PC-9 (cell line): ENCODE measurements at regions of chr3 and their contacts with region 1.

Region 1: DNA sequence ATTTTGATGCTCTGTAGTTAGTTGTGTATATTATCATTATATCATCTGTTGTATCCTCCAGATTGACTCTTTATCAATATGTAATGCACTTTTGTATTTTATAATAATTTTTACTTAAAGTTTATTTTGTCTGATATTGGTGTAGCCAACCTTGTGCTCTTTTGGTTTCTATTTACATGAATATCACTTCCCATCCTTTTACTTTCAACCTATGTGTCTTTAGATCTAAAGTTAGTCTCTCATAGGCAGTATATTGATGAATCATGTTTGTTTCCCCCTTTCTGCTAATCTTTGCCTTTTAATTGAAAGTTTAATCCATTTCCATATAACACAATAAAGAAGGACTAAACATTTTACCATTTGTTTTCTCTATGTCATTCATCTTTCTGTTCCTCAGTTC is 28.1 kb upstream of the CD200R1L start:
- DNase-seq: no peak
- H3K4me3 ChIP-seq: no peak overlapping the region
- H3K27ac ChIP-seq: no peak overlapping the region
- H3K4me1 ChIP-seq: no peaks in the 10 kb centered on the region
- H3K27me3 ChIP-seq: no peaks in the 10 kb centered on the region
- CTCF ChIP-seq: no peak

Region 2: DNA sequence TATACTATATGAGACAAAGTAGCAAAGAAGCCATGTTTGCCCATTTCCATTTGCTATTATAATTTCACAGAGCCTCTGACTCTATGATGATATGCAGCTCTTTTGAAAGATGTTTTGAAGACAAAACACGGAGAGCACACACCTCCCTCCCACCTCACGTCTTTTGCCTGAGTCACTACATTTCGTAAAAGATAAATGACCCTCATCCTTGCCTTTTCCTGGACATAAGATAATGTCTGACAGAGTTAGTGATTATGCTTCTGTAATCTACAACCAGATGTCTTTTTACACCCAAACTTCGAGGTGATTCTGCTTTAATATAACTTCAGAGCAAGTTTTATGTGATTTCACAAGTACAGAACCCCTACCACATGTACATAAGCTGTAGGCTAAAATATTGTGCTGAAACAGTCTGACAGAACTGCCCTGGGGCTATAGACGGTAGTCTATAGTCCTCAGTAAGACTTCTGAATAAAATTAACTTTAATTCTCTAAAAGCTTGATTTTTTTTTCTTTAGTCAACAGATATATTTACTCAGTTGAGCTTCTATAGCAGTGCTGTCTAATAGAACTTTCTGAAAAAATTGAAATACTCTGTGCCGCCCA is 127.9 kb before region 1 on chr3:
- CTCF ChIA-PET with region 1: no interaction called
- POLR2A ChIA-PET with region 1: no interaction called
- intact Hi-C with region 1: no loop called
- DNase-seq: no peak
- H3K4me3 ChIP-seq: no peak overlapping the region
- H3K27ac ChIP-seq: no peak overlapping the region
- H3K4me1 ChIP-seq: peaks cover 34% of the 10 kb centered on the region
- H3K27me3 ChIP-seq: no peaks in the 10 kb centered on the region
- CTCF ChIP-seq: no peak

Region 3: GRCh38 chr3:112884678-112885290 is 10.1 kb after region 1 on chr3:
- CTCF ChIA-PET with region 1: no interaction called
- POLR2A ChIA-PET with region 1: no interaction called
- intact Hi-C with region 1: loop called (anchors 1 kb)
- DNase-seq: no peak
- H3K4me3 ChIP-seq: no peak overlapping the region
- H3K27ac ChIP-seq: no peak overlapping the region
- H3K4me1 ChIP-seq: peaks cover 6% of the 10 kb centered on the region
- H3K27me3 ChIP-seq: no peaks in the 10 kb centered on the region
- CTCF ChIP-seq: no peak

Region 4: GRCh38 chr3:113223475-113224281 is 349.0 kb after region 1 on chr3:
- CTCF ChIA-PET with region 1: no interaction called
- POLR2A ChIA-PET with region 1: no interaction called
- intact Hi-C with region 1: no loop called
- DNase-seq: no peak
- H3K4me3 ChIP-seq: no peak overlapping the region
- H3K27ac ChIP-seq: no peak overlapping the region
- H3K4me1 ChIP-seq: no peaks in the 10 kb centered on the region
- H3K27me3 ChIP-seq: no peaks in the 10 kb centered on the region
- CTCF ChIP-seq: no peak